ENCODE measurements at regions of chr5 and their contacts with region 1.

Region 1: DNA sequence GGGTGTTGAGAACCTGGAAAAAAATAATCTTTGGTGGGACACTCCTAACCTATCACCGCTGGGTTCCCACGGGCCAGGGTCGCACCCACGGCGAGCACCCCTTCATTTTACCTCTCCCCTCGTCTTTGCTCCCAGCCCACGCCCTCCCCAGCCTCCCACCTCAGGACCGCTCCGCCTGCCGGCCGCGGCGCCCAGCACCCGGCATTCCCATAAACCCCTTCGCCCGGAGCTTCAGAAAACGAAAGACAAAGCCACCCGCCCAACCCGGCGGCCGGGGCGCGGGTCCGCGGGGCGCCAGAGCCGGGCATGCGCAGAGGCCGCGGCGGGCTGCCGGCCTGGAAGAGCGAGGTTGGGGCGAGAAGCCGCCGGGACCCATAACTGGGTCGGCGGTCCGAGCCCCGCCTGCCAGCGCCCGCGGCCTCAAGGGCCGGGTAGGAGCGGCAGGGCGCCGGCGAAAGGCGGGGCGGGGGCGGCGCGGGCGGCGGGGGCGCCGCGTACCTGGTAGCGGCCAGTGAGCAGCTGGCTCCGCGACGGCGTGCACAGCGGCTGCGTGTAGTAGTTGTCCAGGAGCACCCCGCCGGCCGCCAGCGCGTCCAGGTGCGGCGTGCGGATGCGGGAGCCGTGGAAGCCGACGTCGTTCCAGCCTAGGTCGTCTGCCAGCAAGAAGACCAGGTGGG is 533 bp downstream of the ARSB start:
- DNase-seq: peak; percentile 76 to 85 (median 80)
- H3K4me3 ChIP-seq: peak overlapping the region; percentile 34 to 70
- H3K4me3 Mint-ChIP-seq: peak overlapping the region; percentile 90 to 94 (median 92)
- H3K27ac ChIP-seq: peak overlapping the region; percentile 60
- H3K27ac Mint-ChIP-seq: peak overlapping the region; percentile 87 to 95 (median 93)
- H3K4me1 ChIP-seq: peaks cover 17% of the 10 kb centered on the region
- H3K4me1 Mint-ChIP-seq: peaks cover 18 to 31% (median 23%) of the 10 kb centered on the region in 4 donors
- H3K27me3 ChIP-seq: no peaks in the 10 kb centered on the region
- H3K27me3 Mint-ChIP-seq: no peaks in the 10 kb centered on the region

Region 2: DNA sequence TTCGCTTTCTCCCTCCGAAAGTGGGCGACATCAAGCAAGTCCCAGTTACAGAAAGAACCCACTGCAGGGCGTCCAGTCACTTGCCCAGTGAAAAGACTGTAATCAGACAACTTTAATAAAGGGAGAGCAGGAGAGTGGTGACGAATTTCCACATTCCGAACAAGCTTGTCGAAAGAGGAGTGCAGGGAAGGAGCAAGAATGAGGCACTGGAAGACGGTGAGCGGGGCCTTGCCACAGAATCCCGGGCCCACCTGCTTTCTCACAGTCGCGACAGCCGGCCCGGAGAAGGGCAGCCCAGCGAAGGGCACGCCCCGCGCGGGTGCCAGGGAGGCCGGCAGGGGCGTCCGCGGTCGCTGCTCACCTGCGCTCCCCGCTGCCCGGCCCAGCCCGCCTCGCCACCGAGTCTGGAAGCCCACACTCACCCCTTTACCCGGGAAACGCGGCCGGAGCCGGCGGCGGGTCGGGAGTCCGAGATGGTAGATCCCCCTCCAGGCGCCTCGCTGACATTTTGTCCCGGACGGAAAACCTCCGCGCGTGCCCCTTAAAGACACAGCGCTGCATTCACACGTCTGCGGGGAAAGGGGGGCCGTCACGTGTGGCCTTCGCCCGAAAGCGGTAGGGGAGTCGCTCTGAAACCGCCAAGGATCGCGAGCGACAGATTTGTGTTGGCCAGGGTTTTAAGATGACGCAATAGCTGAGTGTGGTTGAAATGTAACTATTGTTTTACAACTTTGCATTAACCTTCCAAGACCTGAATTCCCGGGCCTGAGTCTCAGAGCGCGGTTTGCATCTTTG is 1897.7 kb before region 1 on chr5 and contains the start of gene ZBED3:
- CTCF ChIA-PET with region 1: no interaction called
- POLR2A ChIA-PET with region 1: no interaction called
- intact Hi-C with region 1: loop called (anchors 5 kb)
- DNase-seq: peak; percentile 48 to 74 (median 56)
- H3K4me3 ChIP-seq: peak within 1 kb of the TSS; percentile 25 to 54
- H3K4me3 Mint-ChIP-seq: peak within 1 kb of the TSS; percentile 88 to 96 (median 93)
- H3K27ac ChIP-seq: no peak within 1 kb of the TSS
- H3K27ac Mint-ChIP-seq: peak within 1 kb of the TSS in 6 of 7 donors; percentile 3 to 93 (median 87)
- H3K4me1 ChIP-seq: peaks cover 12% of the 10 kb centered on the region
- H3K4me1 Mint-ChIP-seq: peaks cover 10 to 14% (median 14%) of the 10 kb centered on the region in 4 donors
- H3K27me3 ChIP-seq: no peaks in the 10 kb centered on the region
- H3K27me3 Mint-ChIP-seq: peaks cover 2 to 4% of the 10 kb centered on the region in 2 donors
- total RNA-seq, gene ZBED3: 0.67 to 1.4 TPM

Region 3: DNA sequence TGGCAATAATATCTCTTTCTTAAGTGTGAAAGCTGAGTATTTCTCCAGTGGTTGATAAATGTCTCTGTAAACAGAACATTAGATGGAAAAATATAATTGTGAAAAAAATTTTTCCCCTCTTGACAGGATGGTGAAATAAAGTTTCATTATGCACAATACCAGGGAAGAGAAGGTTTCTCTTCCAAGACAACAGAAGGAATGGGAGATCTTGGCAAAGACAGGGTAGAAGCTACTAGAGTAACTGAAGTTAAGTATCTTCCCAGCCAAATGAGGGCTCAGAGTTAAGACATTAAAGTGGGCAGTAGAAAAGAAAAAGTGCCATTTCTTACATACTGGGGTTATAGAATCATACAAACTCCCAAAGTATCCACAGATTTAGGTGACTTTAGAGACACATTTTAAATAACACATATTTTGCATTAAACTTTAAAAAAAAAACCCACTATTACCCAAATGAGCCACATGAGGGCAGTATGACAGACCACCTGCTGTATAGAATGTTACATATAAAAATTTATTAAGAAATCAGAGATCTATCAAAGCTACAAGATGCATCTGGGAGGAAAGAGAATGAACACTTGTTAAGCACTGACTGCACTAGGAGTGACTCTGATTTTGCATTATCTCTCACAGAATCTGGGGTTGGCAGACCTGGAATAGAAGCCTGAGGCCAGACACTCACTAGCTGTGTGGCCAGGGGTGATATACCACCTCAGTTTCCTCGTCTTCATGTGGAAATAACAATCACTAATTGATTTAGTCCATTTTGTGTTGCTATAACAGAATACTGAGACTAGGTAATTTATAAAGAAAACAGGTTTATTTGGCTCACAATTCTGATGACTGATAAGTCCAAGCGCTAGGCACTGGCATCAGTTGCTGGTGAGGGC is 98.0 kb before region 1 on chr5:
- CTCF ChIA-PET with region 1: no interaction called
- POLR2A ChIA-PET with region 1: no interaction called
- intact Hi-C with region 1: no loop called
- DNase-seq: peak in 3 of 5 donors; percentile 2 to 14 (median 11)
- H3K4me3 ChIP-seq: no peak overlapping the region
- H3K4me3 Mint-ChIP-seq: no peak overlapping the region
- H3K27ac ChIP-seq: no peak overlapping the region
- H3K27ac Mint-ChIP-seq: peak overlapping the region in 1 of 7 donors; percentile 13
- H3K4me1 ChIP-seq: peaks cover 8% of the 10 kb centered on the region
- H3K4me1 Mint-ChIP-seq: peaks cover 7 to 17% (median 13%) of the 10 kb centered on the region in 4 donors
- H3K27me3 ChIP-seq: no peaks in the 10 kb centered on the region
- H3K27me3 Mint-ChIP-seq: no peaks in the 10 kb centered on the region

Region 4: DNA sequence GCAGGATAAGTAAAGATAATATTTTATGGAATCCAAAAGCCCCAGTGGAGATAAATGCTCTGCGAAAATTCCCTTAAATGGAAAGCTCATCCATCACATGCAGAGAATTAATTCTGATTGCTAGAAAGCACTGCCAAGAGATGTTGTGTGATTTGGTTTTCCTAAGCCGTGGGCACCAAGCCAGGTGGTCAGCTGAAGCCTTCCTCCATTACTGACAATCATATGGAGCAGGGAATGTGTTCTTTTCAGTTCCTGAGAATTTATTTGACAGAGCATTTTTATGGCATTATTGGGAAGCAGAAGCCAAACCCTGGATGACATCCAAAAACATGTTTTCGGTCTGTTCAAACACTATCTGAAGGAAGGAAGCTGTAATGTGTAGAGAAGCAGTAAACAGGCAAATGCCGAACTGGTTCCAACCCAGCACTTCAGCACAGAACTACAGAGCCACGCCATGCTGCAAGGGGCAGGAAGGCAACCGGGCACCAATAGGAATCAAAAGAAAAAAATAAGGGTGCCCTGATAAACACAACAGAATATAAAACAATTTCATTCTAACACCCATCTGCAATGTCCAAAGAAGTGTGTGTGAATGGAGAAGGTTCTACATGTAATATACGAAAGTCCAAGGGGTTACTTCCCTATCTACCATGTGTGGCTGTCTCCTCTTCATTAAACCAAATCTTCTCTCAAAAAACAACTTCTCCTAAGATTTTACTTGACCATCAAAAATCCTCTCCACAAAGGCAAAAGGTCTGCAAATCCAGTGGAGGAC is 11.7 kb before region 1 on chr5:
- CTCF ChIA-PET with region 1: interaction called, 10 read pairs
- POLR2A ChIA-PET with region 1: interaction called, 6 read pairs
- intact Hi-C with region 1: no loop called
- DNase-seq: no peak
- H3K4me3 ChIP-seq: no peak overlapping the region
- H3K4me3 Mint-ChIP-seq: no peak overlapping the region
- H3K27ac ChIP-seq: no peak overlapping the region
- H3K27ac Mint-ChIP-seq: no peak overlapping the region
- H3K4me1 ChIP-seq: no peaks in the 10 kb centered on the region
- H3K4me1 Mint-ChIP-seq: peaks cover 0 to 3% (median under 1%) of the 10 kb centered on the region in 4 donors
- H3K27me3 ChIP-seq: no peaks in the 10 kb centered on the region
- H3K27me3 Mint-ChIP-seq: no peaks in the 10 kb centered on the region

Region 5: GRCh38 chr5:79109527-79110492 is 125.2 kb after region 1 on chr5:
- CTCF ChIA-PET with region 1: no interaction called
- POLR2A ChIA-PET with region 1: no interaction called
- intact Hi-C with region 1: loop called (anchors 1 kb)
- DNase-seq: peak in 4 of 5 donors; percentile 15 to 28 (median 21)
- H3K4me3 ChIP-seq: no peak overlapping the region
- H3K4me3 Mint-ChIP-seq: no peak overlapping the region
- H3K27ac ChIP-seq: no peak overlapping the region
- H3K27ac Mint-ChIP-seq: no peak overlapping the region
- H3K4me1 ChIP-seq: no peaks in the 10 kb centered on the region
- H3K4me1 Mint-ChIP-seq: peaks cover 0 to 5% (median 0%) of the 10 kb centered on the region in 4 donors
- H3K27me3 ChIP-seq: peaks cover 6% of the 10 kb centered on the region
- H3K27me3 Mint-ChIP-seq: peaks cover 44 to 45% of the 10 kb centered on the region in 2 donors

Region 6: DNA sequence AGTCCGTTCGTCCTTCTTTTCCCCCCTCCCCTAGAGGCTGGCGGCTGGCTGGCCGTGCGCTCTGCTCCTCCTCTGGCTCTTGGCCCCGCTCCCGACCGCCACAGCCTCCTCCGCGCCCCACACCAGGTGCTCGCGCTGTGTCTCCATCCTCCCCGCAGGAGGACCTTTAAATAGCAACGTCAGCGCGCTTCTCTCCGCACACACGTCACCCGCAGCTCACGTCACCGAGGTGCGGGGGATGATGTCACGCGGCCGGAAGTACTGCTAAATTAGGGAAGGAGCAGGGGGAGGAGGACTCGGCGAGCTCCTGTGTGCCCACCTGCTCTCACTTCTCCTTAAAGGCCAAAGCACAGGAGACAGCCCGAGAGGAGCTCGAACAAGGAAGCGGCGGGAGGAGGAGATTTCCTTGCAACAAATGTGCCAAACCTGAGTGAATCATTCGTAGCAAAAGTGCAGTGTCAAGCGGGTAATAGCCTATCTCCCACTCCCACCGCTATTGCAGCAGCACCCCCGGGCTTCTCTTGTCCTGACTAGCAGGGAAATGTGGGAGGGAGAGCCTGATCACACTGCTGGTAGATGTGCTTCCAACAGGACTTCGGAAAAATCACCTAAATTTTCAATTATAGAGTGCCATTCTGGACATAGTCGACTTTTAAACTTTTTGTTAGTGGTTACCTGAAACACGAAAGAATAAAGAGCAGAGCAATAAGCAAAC is 530.0 kb after region 1 on chr5:
- CTCF ChIA-PET with region 1: interaction called, 3 read pairs
- POLR2A ChIA-PET with region 1: no interaction called
- intact Hi-C with region 1: loop called (anchors 5 kb)
- DNase-seq: peak; percentile 90 to 93 (median 92)
- H3K4me3 ChIP-seq: peak overlapping the region; percentile 71 to 84
- H3K4me3 Mint-ChIP-seq: peak overlapping the region; percentile 96 to 99 (median 96)
- H3K27ac ChIP-seq: peak overlapping the region; percentile 82
- H3K27ac Mint-ChIP-seq: peak overlapping the region; percentile 94 to 100 (median 99)
- H3K4me1 ChIP-seq: peaks cover 18% of the 10 kb centered on the region
- H3K4me1 Mint-ChIP-seq: peaks cover 13 to 25% (median 16%) of the 10 kb centered on the region in 4 donors
- H3K27me3 ChIP-seq: peaks cover 9% of the 10 kb centered on the region
- H3K27me3 Mint-ChIP-seq: peaks cover 15 to 18% of the 10 kb centered on the region in 2 donors